GM12878 (cell line): ENCODE measurements at regions of chr4 and their contacts with region 1.

Region 1: GRCh38 chr4:38132107-38132673 is 172.0 kb downstream of the PTTG2 start:
- DNase-seq: peak; percentile 100
- ATAC-seq: peak; percentile 63
- H3K4me3 ChIP-seq: 0 out of 2 replicates have a peak overlapping the region, but pooled peaks have one; percentile 10
- H3K27ac ChIP-seq: peak overlapping the region; percentile 96
- H3K4me1 ChIP-seq: peaks cover 68% of the 10 kb centered on the region
- H3K27me3 ChIP-seq: no peaks in the 10 kb centered on the region
- CTCF ChIP-seq: no peak
- EP300 ChIP-seq: peak; percentile 100
- POLR2A ChIP-seq: peak; percentile 74
- RAD21 ChIP-seq: peak; percentile 14; the same call in 1 of the 2 replicates

Region 2: GRCh38 chr4:38062088-38062893 is 69.9 kb before region 1 on chr4:
- CTCF ChIA-PET with region 1: interaction called, 7 read pairs
- POLR2A ChIA-PET with region 1: interaction called, 6 read pairs
- RAD21 ChIA-PET with region 1: interaction called, 19 read pairs
- SMC1A ChIA-PET with region 1: interaction called, 15 read pairs
- in situ Hi-C with region 1: no loop called
- intact Hi-C with region 1: no loop called
- DNase-seq: no peak
- ATAC-seq: peak; percentile 93
- H3K4me3 ChIP-seq: no peak overlapping the region
- H3K27ac ChIP-seq: peak overlapping the region; percentile 6
- H3K4me1 ChIP-seq: peaks cover 3% of the 10 kb centered on the region; the same call in 1 of the 2 replicates
- H3K27me3 ChIP-seq: no peaks in the 10 kb centered on the region
- CTCF ChIP-seq: peak; percentile 67 to 85 (median 80)
- EP300 ChIP-seq: no peak
- POLR2A ChIP-seq: no peak
- RAD21 ChIP-seq: peak; percentile 95

Region 3: DNA sequence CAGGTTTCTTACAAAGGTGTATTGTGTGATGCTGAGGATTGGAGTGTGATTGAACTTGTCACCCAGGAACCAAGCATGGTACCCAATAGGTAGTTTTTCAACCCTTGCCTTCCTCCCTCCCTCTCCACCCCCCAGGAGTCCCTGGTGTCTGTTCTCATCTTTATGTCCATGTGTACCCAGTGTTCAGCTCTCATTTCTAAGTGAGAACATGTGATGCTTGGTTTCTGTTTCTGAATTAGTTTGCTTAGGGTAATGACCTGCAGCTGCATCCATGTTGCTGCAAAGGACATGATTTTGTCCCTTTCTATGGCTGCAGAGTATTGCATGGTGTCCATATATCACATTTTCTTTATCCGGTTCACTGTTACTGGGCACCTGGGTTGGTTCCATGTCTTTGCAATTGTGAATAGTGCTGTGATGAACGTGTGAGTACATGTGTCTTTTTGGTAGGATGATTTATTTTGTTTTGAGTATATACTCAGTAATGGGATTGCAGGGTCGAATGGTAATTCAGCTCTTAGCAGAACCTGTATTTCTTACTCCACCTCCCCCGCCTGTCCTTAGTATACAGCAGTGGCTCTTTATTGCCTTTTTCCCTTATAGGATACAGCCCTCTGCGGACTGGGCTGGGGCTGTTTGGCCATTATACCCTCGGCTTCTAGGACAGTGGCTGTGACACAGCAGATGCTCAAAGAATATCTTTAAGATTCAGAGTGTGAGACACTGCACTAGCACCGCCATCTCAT is 26.5 kb before region 1 on chr4:
- CTCF ChIA-PET with region 1: no interaction called
- POLR2A ChIA-PET with region 1: no interaction called
- RAD21 ChIA-PET with region 1: interaction called, 14 read pairs
- SMC1A ChIA-PET with region 1: interaction called, 38 read pairs
- in situ Hi-C with region 1: no loop called
- intact Hi-C with region 1: no loop called
- DNase-seq: peak; percentile 45
- ATAC-seq: peak; percentile 92
- H3K4me3 ChIP-seq: no peak overlapping the region
- H3K27ac ChIP-seq: peak overlapping the region; percentile 30
- H3K4me1 ChIP-seq: peaks cover 15% of the 10 kb centered on the region
- H3K27me3 ChIP-seq: no peaks in the 10 kb centered on the region
- CTCF ChIP-seq: no peak
- EP300 ChIP-seq: peak in 1 of 2 experiments; percentile 23; a peak in 1 of 4 replicates
- POLR2A ChIP-seq: no peak
- RAD21 ChIP-seq: peak; percentile 19; the same call in 1 of the 2 replicates

Region 4: DNA sequence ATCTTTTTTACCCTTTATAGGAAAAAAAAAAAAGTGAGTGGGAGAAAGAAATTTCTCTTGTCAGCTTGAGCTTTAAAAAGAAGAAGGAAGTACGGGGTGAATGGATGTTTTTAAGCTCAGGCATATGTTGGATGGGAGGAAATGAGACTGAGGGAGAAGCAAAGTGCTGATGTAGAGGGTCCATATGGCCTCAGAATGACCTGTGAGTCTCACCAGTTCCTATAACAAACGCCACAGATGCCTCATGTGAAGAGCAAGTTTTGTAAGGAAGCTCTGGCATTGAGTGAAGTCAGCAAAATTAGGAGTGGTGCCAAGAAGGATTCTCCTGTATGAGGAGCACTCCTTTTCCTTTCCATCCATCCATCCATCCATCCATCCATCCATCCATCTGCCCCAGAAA is 42.6 kb after region 1 on chr4:
- CTCF ChIA-PET with region 1: interaction called, 43 read pairs
- POLR2A ChIA-PET with region 1: interaction called, 4 read pairs
- RAD21 ChIA-PET with region 1: interaction called, 78 read pairs
- SMC1A ChIA-PET with region 1: interaction called, 67 read pairs
- in situ Hi-C with region 1: loop called (anchors 5 kb)
- intact Hi-C with region 1: loop called (anchors 1 kb)
- DNase-seq: no peak
- ATAC-seq: no peak
- H3K4me3 ChIP-seq: no peak overlapping the region
- H3K27ac ChIP-seq: no peak overlapping the region
- H3K4me1 ChIP-seq: peaks cover 36% of the 10 kb centered on the region
- H3K27me3 ChIP-seq: no peaks in the 10 kb centered on the region
- CTCF ChIP-seq: no peak
- EP300 ChIP-seq: no peak
- POLR2A ChIP-seq: no peak
- RAD21 ChIP-seq: no peak

Region 5: DNA sequence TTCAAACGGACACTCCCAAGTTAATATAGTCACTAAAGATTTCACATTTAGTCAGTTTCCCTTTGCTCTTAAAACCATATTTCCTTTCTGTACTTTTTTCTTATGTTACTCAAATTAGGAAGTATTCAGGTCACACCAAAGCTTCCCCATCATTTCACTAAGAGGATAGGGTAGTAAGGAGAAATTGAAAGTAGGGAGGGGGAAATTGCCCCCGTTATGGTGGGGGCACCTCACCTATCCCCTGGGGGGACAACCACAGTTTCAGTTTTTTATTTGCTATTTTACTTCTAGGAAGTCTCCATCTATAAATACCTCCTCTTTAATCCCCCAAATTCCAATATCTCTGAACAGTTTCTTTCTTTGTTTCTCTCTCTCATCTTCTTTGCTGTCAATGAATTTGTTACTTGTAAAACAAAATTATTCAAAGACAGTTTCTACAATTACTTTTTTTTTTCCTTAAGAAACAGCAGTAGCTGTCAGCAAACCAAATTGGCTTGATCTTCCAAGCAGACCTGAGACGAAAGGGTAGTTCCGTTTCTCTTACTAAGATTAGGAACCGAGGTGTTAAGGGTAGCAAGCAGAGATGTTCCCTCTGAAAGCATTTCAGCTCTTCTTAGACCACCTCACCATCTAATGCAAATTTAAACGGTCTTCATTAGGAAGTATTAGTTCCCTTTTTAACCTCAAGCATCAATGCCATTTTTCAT is 371.7 kb after region 1 on chr4:
- CTCF ChIA-PET with region 1: no interaction called
- POLR2A ChIA-PET with region 1: interaction called, 4 read pairs
- RAD21 ChIA-PET with region 1: interaction called, 15 read pairs
- SMC1A ChIA-PET with region 1: interaction called, 3 read pairs
- in situ Hi-C with region 1: no loop called
- intact Hi-C with region 1: loop called (anchors 5 kb)
- DNase-seq: peak; percentile 86
- ATAC-seq: peak; percentile 95
- H3K4me3 ChIP-seq: no peak overlapping the region; the same call in 1 of the 2 replicates
- H3K27ac ChIP-seq: peak overlapping the region; percentile 47
- H3K4me1 ChIP-seq: peaks cover 31% of the 10 kb centered on the region
- H3K27me3 ChIP-seq: no peaks in the 10 kb centered on the region
- CTCF ChIP-seq: no peak
- EP300 ChIP-seq: peak; percentile 59 to 83; a peak in 1 of 4 replicates
- POLR2A ChIP-seq: no peak
- RAD21 ChIP-seq: no peak; the same call in 1 of the 2 replicates

Region 6: GRCh38 chr4:38856524-38857337 is 724.5 kb after region 1 on chr4 and contains the start of gene TLR6:
- CTCF ChIA-PET with region 1: interaction called, 5 read pairs
- POLR2A ChIA-PET with region 1: no interaction called
- RAD21 ChIA-PET with region 1: interaction called, 4 read pairs
- SMC1A ChIA-PET with region 1: no interaction called
- in situ Hi-C with region 1: no loop called
- intact Hi-C with region 1: loop called (anchors 5 kb)
- DNase-seq: peak; percentile 91
- ATAC-seq: peak; percentile 59
- H3K4me3 ChIP-seq: peak within 1 kb of the TSS; percentile 75
- H3K27ac ChIP-seq: peak within 1 kb of the TSS; percentile 96
- H3K4me1 ChIP-seq: peaks cover 14% of the 10 kb centered on the region
- H3K27me3 ChIP-seq: no peaks in the 10 kb centered on the region
- CTCF ChIP-seq: peak; percentile 62 to 79 (median 77)
- EP300 ChIP-seq: peak in 1 of 2 experiments; percentile 51; a peak in 1 of 4 replicates
- POLR2A ChIP-seq: no peak
- RAD21 ChIP-seq: peak; percentile 88
- polyA plus RNA-seq, gene TLR6: 1.1 to 1.5 TPM